IMR-90 (cell line): ENCODE measurements at regions of chr15 and their contacts with region 1.

Region 1: DNA sequence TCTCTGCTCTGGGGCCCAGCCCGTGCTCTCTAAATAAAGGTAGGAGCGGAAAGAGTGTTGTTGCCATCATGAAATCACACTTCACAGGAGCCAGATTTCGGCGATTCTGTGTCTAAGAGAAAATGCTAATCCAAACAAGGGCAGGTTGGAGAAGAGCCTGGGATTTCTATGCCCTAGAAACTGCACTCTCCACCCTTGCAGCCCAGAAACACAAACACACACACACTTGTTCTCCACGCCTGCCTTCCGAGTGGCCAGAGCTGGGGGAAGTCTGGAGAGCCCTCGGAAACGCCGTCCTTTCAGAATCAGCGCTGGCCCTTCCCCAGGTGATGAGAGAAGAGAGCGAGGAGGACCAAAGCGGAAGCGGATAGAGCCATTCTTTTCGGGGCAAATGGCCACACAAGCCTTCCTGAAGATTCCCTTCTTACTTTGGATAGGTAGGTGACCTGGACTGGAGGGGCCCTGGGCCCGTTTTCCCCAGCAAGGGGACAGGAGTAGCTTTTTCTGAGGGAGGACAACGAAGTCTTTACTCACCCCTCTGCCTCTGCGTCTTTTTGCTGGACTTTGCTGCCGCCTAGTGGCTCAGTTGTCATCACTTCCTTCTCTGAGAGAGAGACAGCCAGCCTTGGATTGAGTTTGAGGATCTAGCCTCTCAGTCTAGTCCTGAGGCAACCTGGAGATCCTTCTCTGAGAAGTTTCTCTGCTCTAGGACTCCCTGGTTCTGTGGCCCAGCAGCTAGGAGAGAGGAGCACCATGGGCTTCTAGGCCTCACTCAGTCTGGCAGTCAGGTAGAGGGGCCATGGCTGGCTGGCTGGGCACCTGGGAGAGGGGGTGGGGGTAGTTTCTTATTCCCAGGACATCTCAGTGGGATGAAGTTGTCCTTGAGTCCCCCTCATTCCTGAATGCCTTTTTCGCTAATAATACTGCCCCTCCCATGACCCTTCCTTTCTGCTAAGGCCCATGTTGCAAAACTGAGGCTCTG is 37.7 kb downstream of the SENP8 start:
- DNase-seq: peak; percentile 74
- ATAC-seq: peak; percentile 96
- H3K4me3 ChIP-seq: peak overlapping the region; percentile 40
- H3K27ac ChIP-seq: no peak overlapping the region
- H3K4me1 ChIP-seq: peaks cover 8% of the 10 kb centered on the region; the same call in 1 of the 2 replicates
- H3K27me3 ChIP-seq: no peaks in the 10 kb centered on the region
- CTCF ChIP-seq: peak; percentile 90
- POLR2A ChIP-seq: peak; percentile 41; the same call in 1 of the 2 replicates
- RAD21 ChIP-seq: peak; percentile 95

Region 2: DNA sequence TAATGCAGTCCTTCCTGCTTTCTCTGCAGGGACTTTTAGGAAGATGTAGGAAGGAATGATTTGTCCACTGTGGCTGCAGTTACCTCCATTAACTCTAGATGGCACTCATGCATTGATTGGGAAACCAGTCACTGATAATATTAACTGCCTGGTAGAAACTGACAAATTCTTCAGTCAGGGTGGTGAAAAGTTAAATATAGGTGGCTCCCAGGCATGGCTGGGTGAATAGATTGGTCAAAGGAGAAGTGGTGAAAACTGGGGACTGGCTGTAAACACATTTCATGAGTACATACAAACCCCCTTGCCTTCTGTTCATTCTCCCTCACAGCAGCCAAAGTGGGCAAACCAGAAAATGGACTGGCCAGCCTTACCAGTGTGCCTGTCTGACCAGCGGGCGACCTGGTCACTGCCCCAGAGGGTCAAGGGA is 707.2 kb before region 1 on chr15:
- CTCF ChIA-PET with region 1: no interaction called
- POLR2A ChIA-PET with region 1: no interaction called
- dilution Hi-C with region 1: no loop called
- in situ Hi-C with region 1: loop called (anchors 10 kb)
- intact Hi-C with region 1: loop called (anchors 2 kb)
- DNase-seq: peak; percentile 71
- ATAC-seq: peak; percentile 75
- H3K4me3 ChIP-seq: no peak overlapping the region
- H3K27ac ChIP-seq: no peak overlapping the region
- H3K4me1 ChIP-seq: peaks cover 13% of the 10 kb centered on the region
- H3K27me3 ChIP-seq: no peaks in the 10 kb centered on the region
- CTCF ChIP-seq: peak; percentile 93
- POLR2A ChIP-seq: no peak
- RAD21 ChIP-seq: peak; percentile 88

Region 3: DNA sequence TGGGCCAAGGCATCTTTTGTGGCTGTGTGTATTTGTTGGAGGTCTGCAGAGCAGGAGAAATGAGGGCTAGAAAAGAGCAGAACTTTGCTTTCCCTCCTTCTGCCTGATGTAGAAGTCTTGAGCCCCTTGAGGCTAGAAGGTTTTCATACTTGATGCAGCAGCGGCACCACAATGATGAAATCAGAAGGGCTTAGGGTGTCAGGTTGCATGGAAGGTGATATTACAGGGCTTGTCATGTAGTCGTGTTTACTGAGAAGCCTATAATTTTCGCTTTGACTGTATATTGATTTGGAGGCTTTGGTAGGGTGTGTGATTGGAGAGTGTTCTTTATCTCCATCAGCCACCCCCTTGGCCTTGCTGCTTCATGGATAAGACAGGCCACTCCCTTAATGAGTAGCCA is 700.8 kb before region 1 on chr15:
- CTCF ChIA-PET with region 1: no interaction called
- POLR2A ChIA-PET with region 1: no interaction called
- dilution Hi-C with region 1: no loop called
- in situ Hi-C with region 1: loop called (anchors 10 kb)
- intact Hi-C with region 1: no loop called
- DNase-seq: peak; percentile 36
- ATAC-seq: 0 out of 2 replicates have a peak, but pooled peaks have one; percentile 25
- H3K4me3 ChIP-seq: no peak overlapping the region
- H3K27ac ChIP-seq: no peak overlapping the region
- H3K4me1 ChIP-seq: peaks cover 10% of the 10 kb centered on the region; the same call in 1 of the 2 replicates
- H3K27me3 ChIP-seq: no peaks in the 10 kb centered on the region
- CTCF ChIP-seq: no peak
- POLR2A ChIP-seq: no peak
- RAD21 ChIP-seq: no peak

Region 4: GRCh38 chr15:71651750-71652186 is 504.2 kb before region 1 on chr15:
- CTCF ChIA-PET with region 1: no interaction called
- POLR2A ChIA-PET with region 1: no interaction called
- dilution Hi-C with region 1: no loop called
- in situ Hi-C with region 1: no loop called
- intact Hi-C with region 1: loop called (anchors 5 kb)
- DNase-seq: peak; percentile 86
- ATAC-seq: peak; percentile 93
- H3K4me3 ChIP-seq: no peak overlapping the region
- H3K27ac ChIP-seq: no peak overlapping the region
- H3K4me1 ChIP-seq: peaks cover 6% of the 10 kb centered on the region
- H3K27me3 ChIP-seq: no peaks in the 10 kb centered on the region
- CTCF ChIP-seq: peak; percentile 74
- POLR2A ChIP-seq: no peak
- RAD21 ChIP-seq: peak; percentile 82

Region 5: DNA sequence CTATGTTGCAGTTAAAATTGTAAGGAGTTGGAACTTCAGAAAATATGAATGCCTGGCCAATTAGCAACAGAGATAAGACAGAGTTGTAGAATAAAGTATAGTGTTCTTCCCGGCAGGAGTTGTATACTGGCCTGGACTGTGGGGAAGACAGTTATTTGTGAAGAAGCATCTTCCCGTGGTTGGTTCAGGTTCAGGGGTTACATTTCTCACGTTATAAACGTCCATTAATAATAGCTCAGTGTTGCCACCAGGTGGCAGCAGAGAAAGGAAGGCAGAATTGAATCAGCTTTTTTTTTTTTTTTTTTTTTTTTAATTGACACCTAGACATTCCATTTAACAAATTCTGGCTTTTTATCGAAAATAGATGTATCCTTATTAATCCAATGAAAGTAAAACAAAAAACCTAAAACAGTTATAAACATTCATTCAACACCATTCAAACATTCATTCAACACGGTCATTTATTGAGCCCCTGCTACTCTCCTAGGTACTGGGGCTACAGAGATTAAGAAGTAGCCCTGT is 412.0 kb before region 1 on chr15:
- CTCF ChIA-PET with region 1: interaction called, 7 read pairs
- POLR2A ChIA-PET with region 1: no interaction called
- dilution Hi-C with region 1: no loop called
- in situ Hi-C with region 1: loop called (anchors 5 kb)
- intact Hi-C with region 1: loop called (anchors 1 kb)
- DNase-seq: peak; percentile 69
- ATAC-seq: peak; percentile 71
- H3K4me3 ChIP-seq: no peak overlapping the region
- H3K27ac ChIP-seq: no peak overlapping the region
- H3K4me1 ChIP-seq: peaks cover 13% of the 10 kb centered on the region
- H3K27me3 ChIP-seq: no peaks in the 10 kb centered on the region
- CTCF ChIP-seq: peak; percentile 74
- POLR2A ChIP-seq: no peak
- RAD21 ChIP-seq: peak; percentile 60

Region 6: GRCh38 chr15:71806452-71806931 is 349.4 kb before region 1 on chr15:
- CTCF ChIA-PET with region 1: interaction called, 3 read pairs
- POLR2A ChIA-PET with region 1: interaction called, 7 read pairs
- dilution Hi-C with region 1: no loop called
- in situ Hi-C with region 1: no loop called
- intact Hi-C with region 1: loop called (anchors 1 kb)
- DNase-seq: peak; percentile 69
- ATAC-seq: peak; percentile 51
- H3K4me3 ChIP-seq: no peak overlapping the region
- H3K27ac ChIP-seq: no peak overlapping the region
- H3K4me1 ChIP-seq: peaks cover 15% of the 10 kb centered on the region
- H3K27me3 ChIP-seq: no peaks in the 10 kb centered on the region
- CTCF ChIP-seq: no peak
- POLR2A ChIP-seq: no peak
- RAD21 ChIP-seq: no peak

Region 7: DNA sequence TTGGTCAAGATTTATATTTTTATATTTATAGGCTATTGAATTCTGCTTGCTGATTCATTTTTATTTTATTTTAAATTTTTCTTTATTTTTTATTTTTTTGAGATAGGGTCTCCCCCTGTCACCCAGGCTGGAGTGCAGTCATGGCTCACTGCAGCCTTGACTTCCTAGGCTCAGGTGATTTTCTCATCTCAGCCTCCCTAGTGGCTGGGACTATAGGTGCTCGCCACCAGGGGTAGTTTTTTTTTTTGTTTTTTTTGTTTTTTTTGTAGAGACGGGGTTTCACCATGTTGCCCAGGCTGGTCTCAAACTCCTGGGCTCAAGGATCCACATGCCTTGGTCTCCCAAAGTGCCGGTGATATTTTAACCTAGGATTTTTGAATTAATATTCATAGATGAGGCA is 314.4 kb before region 1 on chr15:
- CTCF ChIA-PET with region 1: no interaction called
- POLR2A ChIA-PET with region 1: no interaction called
- dilution Hi-C with region 1: no loop called
- in situ Hi-C with region 1: no loop called
- intact Hi-C with region 1: loop called (anchors 10 kb)
- DNase-seq: no peak
- ATAC-seq: no peak
- H3K4me3 ChIP-seq: no peak overlapping the region
- H3K27ac ChIP-seq: no peak overlapping the region
- H3K4me1 ChIP-seq: no peaks in the 10 kb centered on the region
- H3K27me3 ChIP-seq: no peaks in the 10 kb centered on the region
- CTCF ChIP-seq: no peak
- POLR2A ChIP-seq: no peak
- RAD21 ChIP-seq: no peak